Transverse colon (tissue), 4 donors: ENCODE measurements at regions of chr6 and their contacts with region 1.

Region 1: DNA sequence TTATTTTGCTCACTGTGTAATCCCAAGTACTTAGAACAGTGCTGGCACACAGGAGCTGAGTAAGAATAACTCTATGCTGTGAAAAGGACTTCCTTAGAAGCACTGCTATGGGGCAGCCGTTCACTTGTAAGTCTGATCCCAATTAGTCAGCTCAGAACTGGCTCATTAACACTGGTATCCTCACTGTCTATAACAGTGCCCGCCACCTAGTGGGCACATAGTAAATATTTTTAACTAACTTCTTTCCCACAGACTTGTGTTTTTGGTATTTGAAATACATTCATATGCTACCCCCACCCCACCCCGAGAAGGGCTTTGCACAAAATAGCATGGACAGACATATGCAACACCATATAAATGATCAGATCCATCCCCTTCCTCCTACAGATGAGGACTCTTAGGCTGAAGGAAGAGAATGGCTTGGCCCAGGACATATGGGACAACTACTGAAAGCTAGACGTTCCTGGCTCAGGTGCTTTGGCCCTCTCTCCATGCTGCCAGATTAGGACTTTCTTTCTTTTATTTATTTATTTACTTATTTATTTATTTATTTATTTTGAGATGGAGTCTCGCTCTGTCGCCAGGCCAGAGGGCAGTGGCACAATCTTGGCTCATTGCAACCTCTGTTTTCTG is 47.1 kb downstream of the DST start:
- DNase-seq: peak; percentile 35
- H3K4me3 ChIP-seq: no peak overlapping the region
- H3K27ac ChIP-seq: no peak overlapping the region
- H3K4me1 ChIP-seq: peaks cover 0 to 9% (median 4%) of the 10 kb centered on the region in 4 donors
- H3K27me3 ChIP-seq: no peaks in the 10 kb centered on the region
- CTCF ChIP-seq: peak; percentile 44 to 60 (median 58)
- EP300 ChIP-seq: no peak
- POLR2A ChIP-seq: no peak

Region 2: DNA sequence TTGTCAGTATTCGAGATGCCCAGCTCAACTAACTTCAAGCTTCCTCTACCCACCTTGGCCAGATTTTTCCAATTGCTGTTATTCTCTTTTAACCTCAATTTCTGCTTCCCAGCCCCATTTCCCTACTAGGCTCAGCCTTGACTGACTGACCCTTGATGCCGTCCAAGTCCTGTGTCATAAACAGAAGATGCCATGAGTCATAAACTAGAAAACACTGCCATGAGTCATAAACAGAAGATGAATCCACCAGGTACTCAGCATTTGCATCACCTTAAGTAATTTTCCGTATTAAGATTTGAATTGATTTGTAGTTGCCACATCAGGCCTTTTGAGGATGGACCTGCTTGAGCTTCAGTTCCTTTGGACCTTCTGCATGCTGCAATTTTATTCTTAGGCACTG is 1625.3 kb before region 1 on chr6:
- in situ Hi-C with region 1: no loop called
- intact Hi-C with region 1: loop called (anchors 10 kb)
- DNase-seq: no peak
- H3K4me3 ChIP-seq: no peak overlapping the region
- H3K27ac ChIP-seq: no peak overlapping the region
- H3K4me1 ChIP-seq: no peaks in the 10 kb centered on the region
- H3K27me3 ChIP-seq: no peaks in the 10 kb centered on the region
- CTCF ChIP-seq: no peak
- EP300 ChIP-seq: no peak
- POLR2A ChIP-seq: no peak

Region 3: DNA sequence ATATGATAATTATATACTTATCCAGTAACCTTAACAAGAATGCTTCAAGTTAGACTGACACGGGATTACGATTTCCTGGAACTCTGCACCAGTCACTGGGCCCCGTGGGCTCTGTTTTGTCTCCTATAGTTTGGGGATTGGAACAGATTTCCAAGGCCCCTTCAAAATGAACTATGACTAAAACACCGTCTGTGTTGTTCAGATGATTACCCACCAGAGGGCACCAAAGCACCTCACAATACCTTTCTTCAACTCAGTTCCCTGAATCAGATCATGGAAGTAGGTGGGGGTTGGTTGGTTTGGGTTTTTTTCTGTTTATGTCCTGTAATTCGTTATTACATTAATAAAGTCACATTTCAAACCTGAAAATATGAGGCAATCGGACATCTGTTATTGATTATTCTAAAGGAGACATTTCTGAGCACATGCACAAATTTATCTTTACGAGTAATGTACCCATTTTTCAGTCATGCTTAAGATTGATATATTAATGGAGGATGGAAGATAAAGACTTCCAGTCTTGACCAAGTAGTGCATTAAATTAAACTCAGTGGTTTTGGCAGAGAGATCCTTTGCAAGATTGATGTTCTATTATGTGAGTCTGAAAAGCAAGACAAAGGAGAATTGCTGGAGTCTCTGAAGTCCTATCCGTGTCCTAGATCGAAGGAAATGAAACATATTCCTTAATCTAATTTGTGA is 236.3 kb before region 1 on chr6:
- in situ Hi-C with region 1: loop called (anchors 5 to 10 kb)
- intact Hi-C with region 1: loop called (anchors 5 kb)
- DNase-seq: peak; percentile 66
- H3K4me3 ChIP-seq: no peak overlapping the region
- H3K27ac ChIP-seq: no peak overlapping the region
- H3K4me1 ChIP-seq: peaks cover 0 to 8% (median 3%) of the 10 kb centered on the region in 4 donors
- H3K27me3 ChIP-seq: no peaks in the 10 kb centered on the region
- CTCF ChIP-seq: peak; percentile 72 to 89 (median 81)
- EP300 ChIP-seq: no peak
- POLR2A ChIP-seq: no peak

Region 4: GRCh38 chr6:56364827-56365313 is 230.7 kb before region 1 on chr6:
- in situ Hi-C with region 1: loop called in 2 of 4 experiments (anchors 10 kb)
- intact Hi-C with region 1: no loop called
- DNase-seq: no peak
- H3K4me3 ChIP-seq: no peak overlapping the region
- H3K27ac ChIP-seq: peak overlapping the region in 2 of 4 donors; percentile 11 to 23
- H3K4me1 ChIP-seq: peaks cover 0 to 5% (median 2%) of the 10 kb centered on the region in 4 donors
- H3K27me3 ChIP-seq: no peaks in the 10 kb centered on the region
- CTCF ChIP-seq: no peak
- EP300 ChIP-seq: no peak
- POLR2A ChIP-seq: no peak